ENCODE measurements at regions of chr7 and their contacts with region 1.

Region 1: GRCh38 chr7:33050535-33051318 is 11.8 kb downstream of the NT5C3A start:
- DNase-seq: no peak
- ATAC-seq: peak; percentile 64
- H3K4me3 Mint-ChIP-seq: peak overlapping the region; percentile 9
- H3K27ac Mint-ChIP-seq: peak overlapping the region; percentile 56
- H3K4me1 Mint-ChIP-seq: peaks cover 66% of the 10 kb centered on the region
- H3K27me3 Mint-ChIP-seq: no peaks in the 10 kb centered on the region
- CTCF ChIP-seq: no peak

Region 2: DNA sequence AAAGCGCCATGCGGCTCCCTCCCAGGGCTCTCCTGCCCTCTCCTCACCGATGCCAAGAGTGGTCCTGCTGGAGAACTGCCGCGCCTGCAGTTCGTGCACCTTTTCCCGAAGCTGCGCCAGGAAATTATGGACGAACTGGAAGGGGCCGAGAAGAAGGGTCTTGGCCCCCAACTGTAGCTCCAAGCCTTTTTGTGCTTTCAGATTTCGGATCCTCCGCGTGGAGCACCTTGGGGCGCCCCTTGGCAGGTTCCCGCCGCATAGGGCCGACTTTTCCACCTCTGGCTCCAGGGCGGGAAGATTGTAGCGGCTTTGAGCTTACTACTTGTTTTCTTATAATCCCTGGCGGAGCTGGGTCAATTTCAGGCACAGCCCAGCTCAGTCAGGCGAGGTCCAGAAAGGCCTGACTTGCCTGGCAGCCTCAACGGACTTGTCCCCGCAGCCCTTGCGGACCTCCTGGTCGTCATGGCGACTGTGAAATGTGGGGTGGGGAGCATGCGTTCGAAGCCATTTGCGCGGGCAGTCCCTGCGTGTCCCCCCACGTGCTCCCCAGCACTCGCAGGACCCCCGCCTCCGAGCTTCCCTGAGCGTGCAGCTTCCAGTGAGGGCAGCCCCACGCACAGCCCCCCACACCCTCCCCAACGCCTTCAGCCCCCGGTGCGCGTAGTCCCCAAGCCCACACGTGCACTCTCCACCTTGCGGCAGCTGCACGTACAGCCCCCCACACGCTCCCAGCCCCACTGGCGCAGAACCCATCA is 289.1 kb before region 1 on chr7:
- CTCF ChIA-PET with region 1: no interaction called
- POLR2A ChIA-PET with region 1: no interaction called
- intact Hi-C with region 1: loop called (anchors 10 kb)
- DNase-seq: no peak
- ATAC-seq: no peak
- H3K4me3 Mint-ChIP-seq: peak overlapping the region; percentile 53
- H3K27ac Mint-ChIP-seq: no peak overlapping the region
- H3K4me1 Mint-ChIP-seq: peaks cover 15% of the 10 kb centered on the region
- H3K27me3 Mint-ChIP-seq: peaks cover 27% of the 10 kb centered on the region
- CTCF ChIP-seq: no peak

Region 3: GRCh38 chr7:32803406-32804141 is 247.2 kb before region 1 on chr7:
- CTCF ChIA-PET with region 1: interaction called, 4 read pairs
- POLR2A ChIA-PET with region 1: no interaction called
- intact Hi-C with region 1: loop called (anchors 1 kb)
- DNase-seq: no peak
- ATAC-seq: no peak
- H3K4me3 Mint-ChIP-seq: no peak overlapping the region
- H3K27ac Mint-ChIP-seq: no peak overlapping the region
- H3K4me1 Mint-ChIP-seq: no peaks in the 10 kb centered on the region
- H3K27me3 Mint-ChIP-seq: no peaks in the 10 kb centered on the region
- CTCF ChIP-seq: no peak

Region 4: DNA sequence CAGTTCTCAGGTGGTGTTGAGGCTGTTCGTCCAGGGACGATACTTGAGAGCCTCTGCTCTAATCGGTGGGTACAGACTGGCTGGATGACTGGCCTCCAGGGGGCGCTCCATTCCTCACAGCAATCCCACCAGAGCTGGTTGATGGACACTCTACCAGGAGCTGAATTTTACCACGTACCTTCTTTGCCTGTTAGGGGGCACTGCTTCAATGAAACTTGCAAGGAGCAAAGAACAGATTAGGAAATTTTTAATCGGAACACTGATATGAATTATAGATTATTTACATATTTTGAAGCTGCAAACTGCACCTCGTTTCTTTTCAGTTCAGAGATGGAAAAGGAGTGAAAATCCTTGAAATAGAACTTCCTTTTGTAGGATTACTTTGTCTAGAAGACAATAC is 204.0 kb before region 1 on chr7:
- CTCF ChIA-PET with region 1: interaction called, 20 read pairs
- POLR2A ChIA-PET with region 1: no interaction called
- intact Hi-C with region 1: loop called (anchors 1 kb)
- DNase-seq: peak; percentile 81
- ATAC-seq: peak; percentile 100
- H3K4me3 Mint-ChIP-seq: no peak overlapping the region
- H3K27ac Mint-ChIP-seq: no peak overlapping the region
- H3K4me1 Mint-ChIP-seq: peaks cover 5% of the 10 kb centered on the region
- H3K27me3 Mint-ChIP-seq: peaks cover 18% of the 10 kb centered on the region
- CTCF ChIP-seq: peak; percentile 52